Activated CD4-positive, alpha-beta T cell treated with anti-CD3 and anti-CD28 coated beads, Interleukin-2, amount 10 ng/mL, durations not matched to agents 24 days and 14 days (primary cell): ENCODE measurements at regions of chr6 and their contacts with region 1.

Region 1: GRCh38 chr6:89371849-89372505 is 19.5 kb upstream of the UBE2J1 start:
- DNase-seq: peak; percentile 95
- H3K4me3 Mint-ChIP-seq: peak overlapping the region; percentile 48
- H3K27ac Mint-ChIP-seq: peak overlapping the region; percentile 77
- H3K4me1 Mint-ChIP-seq: peaks cover 39% of the 10 kb centered on the region
- H3K27me3 Mint-ChIP-seq: no peaks in the 10 kb centered on the region

Region 2: GRCh38 chr6:88982720-88983119 is 389.3 kb before region 1 on chr6:
- intact Hi-C with region 1: loop called (anchors 5 kb)
- DNase-seq: peak; percentile 71
- H3K4me3 Mint-ChIP-seq: no peak overlapping the region
- H3K27ac Mint-ChIP-seq: no peak overlapping the region
- H3K4me1 Mint-ChIP-seq: no peaks in the 10 kb centered on the region
- H3K27me3 Mint-ChIP-seq: peaks cover 12% of the 10 kb centered on the region

Region 3: GRCh38 chr6:89352278-89353117 is 19.5 kb before region 1 on chr6 and contains the start of gene UBE2J1:
- intact Hi-C with region 1: loop called (anchors 1 kb)
- DNase-seq: peak; percentile 94
- H3K4me3 Mint-ChIP-seq: peak within 1 kb of the TSS; percentile 91
- H3K27ac Mint-ChIP-seq: peak within 1 kb of the TSS; percentile 94
- H3K4me1 Mint-ChIP-seq: peaks cover 66% of the 10 kb centered on the region
- H3K27me3 Mint-ChIP-seq: no peaks in the 10 kb centered on the region
- total RNA-seq, gene UBE2J1: 31.6 and 33.5 TPM in 2 replicates

Region 4: DNA sequence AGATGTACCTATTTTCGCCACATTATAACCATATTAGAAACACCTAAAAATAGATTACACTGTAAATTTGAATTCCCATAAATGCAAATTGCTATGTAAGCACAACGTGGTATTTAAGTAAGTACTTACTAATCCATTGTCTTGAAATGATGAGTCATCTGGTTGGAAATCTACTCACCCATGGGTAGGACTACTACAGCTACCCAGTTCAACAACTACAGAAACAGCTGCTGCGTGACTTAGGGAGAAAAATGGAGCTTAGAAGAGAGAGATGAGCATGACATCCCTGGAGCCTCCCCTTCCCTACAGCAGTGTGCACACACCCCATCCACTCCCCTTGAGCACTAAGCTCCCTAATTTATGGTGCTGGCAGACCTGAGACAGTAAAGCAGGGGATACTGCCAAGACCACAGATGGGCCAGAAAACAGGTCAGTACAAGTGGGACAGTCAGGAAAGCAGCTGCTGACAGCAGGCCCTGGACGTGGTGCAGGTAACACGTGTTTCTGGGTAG is 13.2 kb after region 1 on chr6:
- intact Hi-C with region 1: no loop called
- DNase-seq: no peak
- H3K4me3 Mint-ChIP-seq: no peak overlapping the region
- H3K27ac Mint-ChIP-seq: no peak overlapping the region
- H3K4me1 Mint-ChIP-seq: peaks cover 9% of the 10 kb centered on the region
- H3K27me3 Mint-ChIP-seq: peaks cover 2% of the 10 kb centered on the region

Region 5: GRCh38 chr6:89412071-89413005 is 40.4 kb after region 1 on chr6 and contains the start of gene RRAGD:
- intact Hi-C with region 1: loop called (anchors 1 kb)
- DNase-seq: peak; percentile 89
- H3K4me3 Mint-ChIP-seq: peak within 1 kb of the TSS; percentile 97
- H3K27ac Mint-ChIP-seq: peak within 1 kb of the TSS; percentile 95
- H3K4me1 Mint-ChIP-seq: peaks cover 17% of the 10 kb centered on the region
- H3K27me3 Mint-ChIP-seq: peaks cover 51% of the 10 kb centered on the region
- total RNA-seq, gene RRAGD: 10.6 and 10.9 TPM in 2 replicates

Region 6: GRCh38 chr6:89610149-89610642 is 238.2 kb after region 1 on chr6:
- intact Hi-C with region 1: loop called (anchors 2 kb)
- DNase-seq: peak; percentile 93
- H3K4me3 Mint-ChIP-seq: no peak overlapping the region
- H3K27ac Mint-ChIP-seq: no peak overlapping the region
- H3K4me1 Mint-ChIP-seq: peaks cover 12% of the 10 kb centered on the region
- H3K27me3 Mint-ChIP-seq: no peaks in the 10 kb centered on the region